ENCODE measurements at regions of chr18 and their contacts with region 1.

Region 1: GRCh38 chr18:51211552-51211951 is 14.1 kb upstream of the MEX3C start:
- DNase-seq: peak; percentile 71
- H3K4me3 Mint-ChIP-seq: no peak overlapping the region
- H3K27ac Mint-ChIP-seq: peak overlapping the region; percentile 31
- H3K4me1 Mint-ChIP-seq: peaks cover 26% of the 10 kb centered on the region
- H3K27me3 Mint-ChIP-seq: no peaks in the 10 kb centered on the region

Region 2: DNA sequence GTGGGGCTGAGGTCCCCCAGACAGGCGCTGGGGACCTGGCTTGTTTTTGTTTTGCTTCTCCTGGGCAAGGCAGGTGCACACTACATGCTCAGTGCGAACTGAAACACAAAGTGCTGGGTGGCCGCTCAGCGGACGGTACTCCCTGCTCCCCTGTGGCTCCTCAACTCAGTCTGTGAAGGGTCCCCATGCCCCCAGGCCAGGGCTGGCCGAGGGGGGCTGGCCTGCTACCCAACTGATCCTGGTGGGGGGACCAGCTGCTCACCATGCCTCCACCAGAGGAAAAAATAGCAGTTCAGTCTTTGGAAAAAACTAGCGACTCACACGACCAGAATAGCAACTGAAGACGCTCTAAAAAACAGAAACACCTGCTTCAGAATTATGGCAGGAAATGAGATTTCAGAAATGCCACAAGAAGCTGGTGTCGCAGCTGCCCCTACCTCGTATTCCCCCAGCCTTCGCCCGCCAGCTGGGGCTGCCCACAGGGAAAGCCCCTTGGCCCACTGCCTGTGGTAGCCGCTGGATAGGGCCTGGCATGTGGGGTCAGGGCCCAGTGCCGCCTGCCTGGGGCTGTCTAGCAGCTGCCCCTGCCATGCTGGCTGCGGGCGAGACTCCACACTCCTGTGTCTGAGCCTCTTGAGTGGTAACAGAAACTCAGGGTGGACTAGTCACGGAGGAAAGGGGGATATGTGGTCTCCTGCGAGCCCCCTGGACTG is 57.7 kb before region 1 on chr18:
- intact Hi-C with region 1: loop called (anchors 1 kb)
- DNase-seq: peak; percentile 30
- H3K4me3 Mint-ChIP-seq: peak overlapping the region; percentile 76
- H3K27ac Mint-ChIP-seq: peak overlapping the region; percentile 96
- H3K4me1 Mint-ChIP-seq: peaks cover 48% of the 10 kb centered on the region
- H3K27me3 Mint-ChIP-seq: no peaks in the 10 kb centered on the region

Region 3: DNA sequence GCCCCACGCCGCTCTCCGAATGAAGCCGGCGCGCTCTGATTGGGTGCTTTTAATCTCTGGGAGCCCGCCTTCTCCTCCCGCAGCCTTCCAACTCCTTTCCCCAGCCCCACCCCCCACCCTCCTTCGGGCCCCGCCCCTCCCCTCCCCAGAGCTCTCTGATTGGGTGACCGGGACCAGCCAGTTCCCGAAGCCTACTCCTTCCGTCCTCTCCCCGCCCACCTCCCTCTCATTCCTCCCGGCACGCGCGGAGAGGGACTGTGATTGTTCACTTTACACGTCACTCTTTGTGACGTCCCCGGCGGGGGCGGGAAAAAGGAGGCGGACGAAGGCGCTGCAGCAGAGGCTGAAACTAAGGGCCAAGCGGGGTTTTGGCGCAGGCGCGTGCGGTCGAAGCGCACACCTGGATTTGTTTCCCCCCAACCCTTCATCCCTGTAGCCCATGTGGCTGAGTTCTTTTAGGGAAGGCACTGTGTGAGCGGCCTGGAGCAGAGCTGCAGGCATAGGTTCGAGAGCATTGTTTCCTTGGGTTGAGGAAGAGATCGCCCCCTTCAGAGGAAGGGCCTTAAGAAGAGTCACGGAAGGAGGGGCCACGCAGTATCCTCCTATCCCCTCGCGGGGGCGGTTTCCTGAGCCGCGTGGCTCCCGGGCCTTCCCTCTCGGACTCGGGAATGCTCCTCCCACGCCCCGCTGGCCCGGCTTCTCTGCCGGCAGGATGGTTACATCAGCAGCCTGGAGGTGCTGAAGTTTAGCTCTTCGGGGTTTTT is 13.7 kb before region 1 on chr18 and contains the start of gene MEX3C:
- intact Hi-C with region 1: loop called (anchors 1 kb)
- DNase-seq: peak; percentile 99
- H3K4me3 Mint-ChIP-seq: peak within 1 kb of the TSS; percentile 95
- H3K27ac Mint-ChIP-seq: peak within 1 kb of the TSS; percentile 96
- H3K4me1 Mint-ChIP-seq: peaks cover 27% of the 10 kb centered on the region
- H3K27me3 Mint-ChIP-seq: no peaks in the 10 kb centered on the region
- total RNA-seq, gene MEX3C: 48.6 and 49.3 TPM in 2 replicates

Region 4: GRCh38 chr18:51235011-51235789 is 23.6 kb after region 1 on chr18:
- intact Hi-C with region 1: loop called (anchors 1 kb)
- DNase-seq: no peak
- H3K4me3 Mint-ChIP-seq: no peak overlapping the region
- H3K27ac Mint-ChIP-seq: peak overlapping the region; percentile 19
- H3K4me1 Mint-ChIP-seq: peaks cover 22% of the 10 kb centered on the region
- H3K27me3 Mint-ChIP-seq: no peaks in the 10 kb centered on the region

Region 5: GRCh38 chr18:51290860-51291259 is 79.3 kb after region 1 on chr18:
- intact Hi-C with region 1: no loop called
- DNase-seq: no peak
- H3K4me3 Mint-ChIP-seq: no peak overlapping the region
- H3K27ac Mint-ChIP-seq: no peak overlapping the region
- H3K4me1 Mint-ChIP-seq: no peaks in the 10 kb centered on the region
- H3K27me3 Mint-ChIP-seq: no peaks in the 10 kb centered on the region

Measured in activated T-helper 2 cell treated with anti-CD3 and anti-CD28 coated beads, Interferon-gamma antibody, Interleukin-2, Interleukin-4, amounts not matched to agents 10 μg/mL and 5 μg/mL and 100 μg/mL, durations not matched to agents 14 hours and 24 hours and 36 hours (primary cell).